Head of caudate nucleus (tissue), 42 donors: ENCODE measurements at regions of chr16 and their contacts with region 1.

Region 1: DNA sequence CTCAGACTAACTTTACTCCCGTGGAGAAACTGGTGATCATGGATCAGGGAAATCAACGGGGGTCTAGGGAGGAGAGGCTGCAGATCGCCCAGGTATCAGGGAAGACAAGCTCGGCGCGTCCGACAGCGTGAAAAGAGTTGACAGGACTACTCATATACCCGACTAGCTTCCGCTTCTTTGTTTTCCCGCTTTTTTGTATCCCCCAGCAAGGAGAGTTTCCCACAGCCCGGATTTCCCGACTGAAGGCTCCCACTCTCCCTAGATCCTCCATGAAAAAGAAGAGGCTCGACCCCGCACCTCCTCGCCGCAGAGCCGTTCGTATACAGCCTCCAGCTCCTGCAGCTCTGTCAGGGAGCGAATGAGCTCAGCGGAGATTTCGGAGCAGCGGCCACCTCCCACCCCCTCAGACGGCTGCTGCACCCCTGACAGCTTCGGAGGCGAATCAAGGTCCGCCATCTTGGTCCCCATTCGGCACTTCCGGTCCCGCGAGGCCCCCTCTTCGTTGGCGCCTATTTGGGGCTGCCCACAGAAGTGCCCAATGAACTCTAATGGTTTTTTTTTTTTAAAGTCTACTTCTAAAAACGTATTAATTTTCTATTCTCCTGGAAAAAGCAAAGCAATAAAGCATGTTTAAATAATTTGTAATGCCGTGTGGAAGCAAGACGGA is at the start of gene COG4:
- DNase-seq: peak; percentile 82 to 96 (median 91)

Region 2: GRCh38 chr16:70380861-70381603 is 142.2 kb before region 1 on chr16:
- intact Hi-C with region 1: loop called (anchors 5 kb)
- DNase-seq: peak; percentile 94 to 99 (median 97)

Region 3: DNA sequence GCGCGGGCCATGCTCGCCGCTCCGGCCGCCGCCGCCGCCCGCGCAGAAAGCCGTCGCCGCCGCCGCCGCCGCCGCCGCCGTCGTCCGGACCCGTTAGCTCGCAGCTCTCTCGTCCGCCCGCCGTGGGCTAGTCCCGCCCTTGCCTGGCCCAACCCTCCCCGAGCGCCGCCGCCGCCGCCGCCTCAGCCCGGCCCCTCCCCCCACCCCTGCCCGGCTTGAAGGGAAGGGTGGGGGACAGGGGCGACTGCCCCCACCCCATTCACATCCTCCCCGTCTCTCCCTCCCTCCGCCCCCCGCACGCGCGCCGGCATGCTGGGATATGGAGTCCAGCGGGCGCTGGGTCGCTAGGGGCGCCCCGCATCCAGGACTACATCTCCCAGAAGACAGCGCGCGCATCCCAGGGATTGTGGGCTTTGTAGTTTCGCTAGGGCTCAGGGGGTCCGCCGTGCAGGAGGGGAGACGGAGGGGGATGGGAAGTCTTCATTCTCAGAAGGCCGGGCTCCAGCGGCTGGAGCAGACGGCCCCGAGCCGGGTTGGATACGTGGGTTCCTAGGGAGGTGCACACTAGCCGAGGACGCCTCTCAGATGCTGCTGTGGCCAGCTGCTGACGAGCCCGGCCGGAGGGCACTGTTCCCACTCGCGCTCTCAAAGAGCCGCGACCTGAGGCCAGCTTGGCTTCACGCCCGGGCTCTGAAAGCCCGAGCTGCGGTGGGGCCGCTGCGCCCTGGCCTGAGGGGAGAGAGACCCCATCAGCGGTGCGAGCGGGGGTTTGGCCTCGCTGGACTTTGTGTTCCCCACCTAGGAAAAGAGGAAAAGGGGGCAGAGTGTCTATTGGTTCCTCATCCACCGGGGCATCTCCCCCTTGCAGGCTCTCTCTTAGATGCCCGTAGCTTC is 84.0 kb before region 1 on chr16 and contains the start of gene ST3GAL2:
- intact Hi-C with region 1: loop called (anchors 10 kb)
- DNase-seq: peak; percentile 90 to 99 (median 96)

Region 4: GRCh38 chr16:70460737-70461261 is 62.4 kb before region 1 on chr16:
- intact Hi-C with region 1: no loop called
- DNase-seq: no peak

Region 5: GRCh38 chr16:70653809-70654771 is 130.9 kb after region 1 on chr16:
- intact Hi-C with region 1: loop called (anchors 5 kb)
- DNase-seq: peak in 41 of 42 donors; percentile 62 to 92 (median 82)